ENCODE measurements at regions of chr13 and their contacts with region 1.

Region 1: GRCh38 chr13:42039946-42040729 is 8.3 kb upstream of the DGKH start:
- DNase-seq: peak; percentile 93
- ATAC-seq: peak; percentile 94 to 95

Region 2: GRCh38 chr13:41973247-41973741 is 66.8 kb before region 1 on chr13:
- intact Hi-C with region 1: loop called in 1 of 2 experiments (anchors 10 kb)
- DNase-seq: no peak
- ATAC-seq: peak; percentile 41 to 82

Region 3: DNA sequence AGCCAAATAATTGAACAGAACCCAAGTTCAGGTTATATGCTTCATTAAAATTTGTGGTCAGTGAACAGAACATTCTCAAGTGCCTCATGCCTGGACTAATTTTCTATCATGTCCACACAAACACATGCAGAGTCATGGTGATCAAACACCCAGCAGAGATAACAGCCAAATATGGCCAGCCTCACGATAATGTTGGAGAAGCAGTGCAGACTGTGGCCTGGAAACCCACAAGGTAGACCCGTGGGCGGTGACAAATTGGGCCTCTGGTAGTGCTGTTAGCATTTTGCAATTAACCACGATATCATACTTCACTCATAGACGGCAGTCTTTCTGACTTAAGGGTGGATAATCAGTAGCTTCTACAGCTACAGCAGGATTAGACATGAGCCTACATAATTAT is 44.2 kb before region 1 on chr13:
- intact Hi-C with region 1: loop called in 1 of 2 experiments (anchors 5 kb)
- DNase-seq: peak; percentile 28
- ATAC-seq: peak; percentile 61 to 76

Region 4: GRCh38 chr13:42102961-42103865 is 63.1 kb after region 1 on chr13:
- intact Hi-C with region 1: loop called in 1 of 2 experiments (anchors 10 kb)
- DNase-seq: no peak
- ATAC-seq: no peak

Region 5: DNA sequence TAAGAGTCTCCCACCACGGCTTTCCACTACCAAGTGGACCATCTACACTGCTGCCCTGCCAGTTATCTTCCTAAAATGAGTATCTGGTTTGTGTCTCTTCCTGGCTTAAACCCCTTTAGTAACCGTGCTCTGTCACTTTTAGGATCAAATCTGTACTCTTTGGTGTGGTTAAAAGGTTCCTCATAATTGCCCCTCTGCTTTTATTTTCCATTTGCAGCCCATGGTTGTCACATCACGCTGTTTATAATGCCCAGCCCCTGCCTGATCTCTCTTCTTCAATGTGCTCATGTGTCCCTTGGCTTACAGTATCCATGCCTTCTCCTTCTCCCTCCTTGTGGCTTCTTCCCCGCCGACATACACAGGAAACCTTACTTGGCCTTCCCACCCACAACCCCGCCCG is 108.4 kb after region 1 on chr13:
- intact Hi-C with region 1: no loop called
- DNase-seq: no peak
- ATAC-seq: no peak

Measured in left cardiac atrium (tissue), 4 donors.